ENCODE measurements at regions of chr11 and their contacts with region 1.

Region 1: GRCh38 chr11:57834852-57835251 is 73.2 kb downstream of the CTNND1 start:
- DNase-seq: no peak
- H3K4me3 Mint-ChIP-seq: no peak overlapping the region
- H3K27ac Mint-ChIP-seq: no peak overlapping the region
- H3K4me1 Mint-ChIP-seq: no peaks in the 10 kb centered on the region
- H3K27me3 Mint-ChIP-seq: no peaks in the 10 kb centered on the region
- CTCF ChIP-seq: no peak

Region 2: GRCh38 chr11:57800444-57801182 is 34.2 kb before region 1 on chr11:
- CTCF ChIA-PET with region 1: no interaction called
- POLR2A ChIA-PET with region 1: no interaction called
- intact Hi-C with region 1: no loop called
- DNase-seq: peak; percentile 76
- H3K4me3 Mint-ChIP-seq: no peak overlapping the region
- H3K27ac Mint-ChIP-seq: no peak overlapping the region
- H3K4me1 Mint-ChIP-seq: peaks cover 20% of the 10 kb centered on the region
- H3K27me3 Mint-ChIP-seq: no peaks in the 10 kb centered on the region
- CTCF ChIP-seq: peak; percentile 71

Region 3: DNA sequence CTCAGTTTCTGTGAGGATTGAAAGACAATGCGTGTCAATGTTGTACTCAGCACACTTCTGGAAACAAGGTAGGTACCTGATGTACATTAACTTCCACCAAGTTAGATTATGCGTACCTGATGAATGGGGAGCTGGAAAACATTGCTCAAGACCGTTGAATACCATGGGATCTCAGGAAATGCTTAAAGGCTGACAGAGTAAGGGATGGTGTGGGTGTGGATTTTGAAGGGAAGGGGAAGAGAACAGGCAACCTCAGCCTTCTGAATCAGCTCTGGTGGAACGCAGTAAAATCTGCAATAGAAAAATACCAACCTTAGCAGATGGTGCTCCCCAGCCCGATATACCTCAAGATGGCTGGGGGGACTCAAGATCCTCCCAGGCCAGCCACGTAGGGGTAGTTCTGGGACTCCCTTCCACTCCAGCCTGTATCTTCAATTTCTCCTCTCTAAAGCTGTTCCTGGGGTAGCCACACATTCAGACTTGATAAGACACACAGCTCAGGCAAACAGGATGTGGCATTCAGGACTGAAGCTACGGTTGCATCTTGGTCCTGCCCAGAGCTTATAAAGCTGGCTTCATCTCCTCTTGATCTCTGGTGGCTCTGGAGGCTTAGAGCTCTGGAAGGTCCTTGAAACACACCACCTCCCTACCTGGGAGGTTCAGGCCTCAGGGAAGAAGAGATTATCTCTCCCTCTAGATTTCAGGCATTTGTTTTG is 38.5 kb after region 1 on chr11:
- CTCF ChIA-PET with region 1: no interaction called
- POLR2A ChIA-PET with region 1: no interaction called
- intact Hi-C with region 1: no loop called
- DNase-seq: peak; percentile 62
- H3K4me3 Mint-ChIP-seq: no peak overlapping the region
- H3K27ac Mint-ChIP-seq: peak overlapping the region; percentile 32
- H3K4me1 Mint-ChIP-seq: peaks cover 23% of the 10 kb centered on the region
- H3K27me3 Mint-ChIP-seq: no peaks in the 10 kb centered on the region
- CTCF ChIP-seq: no peak

Region 4: GRCh38 chr11:57903564-57904123 is 68.8 kb after region 1 on chr11:
- CTCF ChIA-PET with region 1: no interaction called
- POLR2A ChIA-PET with region 1: interaction called, 3 read pairs
- intact Hi-C with region 1: loop called (anchors 10 kb)
- DNase-seq: peak; percentile 84
- H3K4me3 Mint-ChIP-seq: peak overlapping the region; percentile 77
- H3K27ac Mint-ChIP-seq: peak overlapping the region; percentile 88
- H3K4me1 Mint-ChIP-seq: peaks cover 67% of the 10 kb centered on the region
- H3K27me3 Mint-ChIP-seq: no peaks in the 10 kb centered on the region
- CTCF ChIP-seq: no peak

Region 5: DNA sequence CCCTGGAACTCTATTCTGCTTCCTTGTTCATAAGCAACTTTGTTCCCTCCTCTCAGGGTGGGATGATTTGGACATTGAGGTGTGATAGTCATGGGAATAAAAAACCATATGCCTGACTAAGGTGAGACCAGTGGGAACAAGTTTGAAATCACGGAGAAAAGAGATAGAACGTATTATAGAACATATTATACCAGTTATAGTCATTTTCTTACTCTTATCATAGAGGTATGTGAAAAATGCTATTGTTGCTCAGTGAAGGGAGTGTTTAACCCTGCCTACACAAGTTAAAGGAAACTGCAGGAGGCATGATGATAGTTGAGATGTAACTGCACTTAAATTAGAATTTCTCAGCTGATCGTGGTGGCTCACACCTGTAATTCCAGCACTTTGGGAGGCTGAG is 211.4 kb after region 1 on chr11:
- CTCF ChIA-PET with region 1: no interaction called
- POLR2A ChIA-PET with region 1: no interaction called
- intact Hi-C with region 1: no loop called
- DNase-seq: no peak
- H3K4me3 Mint-ChIP-seq: no peak overlapping the region
- H3K27ac Mint-ChIP-seq: no peak overlapping the region
- H3K4me1 Mint-ChIP-seq: no peaks in the 10 kb centered on the region
- H3K27me3 Mint-ChIP-seq: no peaks in the 10 kb centered on the region
- CTCF ChIP-seq: no peak